ENCODE measurements at regions of chr16 and their contacts with region 1.

Region 1: DNA sequence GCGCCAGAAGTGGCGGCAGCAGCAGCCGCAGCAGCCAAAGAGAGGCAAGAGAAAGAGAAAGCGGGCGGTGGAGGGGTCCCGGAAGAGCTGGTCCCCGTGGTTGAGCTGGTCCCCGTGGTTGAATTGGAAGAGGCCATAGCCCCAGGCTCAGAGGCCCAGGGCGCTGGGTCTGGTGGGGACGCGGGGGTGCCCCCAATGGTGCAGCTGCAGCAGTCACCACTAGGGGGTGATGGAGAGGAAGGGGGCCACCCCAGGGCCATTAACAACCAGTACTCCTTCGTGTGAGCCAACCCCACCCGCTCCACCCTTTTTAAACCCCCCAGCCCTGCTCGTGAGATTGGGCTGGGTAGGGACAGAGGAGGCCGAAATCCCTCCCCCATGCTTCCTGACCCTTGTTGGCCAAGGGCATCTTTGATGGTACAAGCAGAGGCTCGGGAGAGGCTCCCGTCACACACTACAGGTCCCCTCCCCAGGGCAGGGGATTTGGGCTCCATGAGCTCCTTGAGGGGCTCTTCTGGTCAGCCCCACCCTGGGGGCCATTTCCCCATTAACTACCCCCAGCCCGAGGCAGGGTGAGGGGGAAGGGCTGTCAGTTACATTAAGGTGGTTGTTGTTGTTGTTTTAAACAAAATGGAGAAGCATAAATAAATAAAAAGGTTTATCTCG is 4.6 kb upstream of the ATP2A1 start:
- DNase-seq: peak; percentile 74
- CTCF ChIP-seq: peak; percentile 55

Region 2: DNA sequence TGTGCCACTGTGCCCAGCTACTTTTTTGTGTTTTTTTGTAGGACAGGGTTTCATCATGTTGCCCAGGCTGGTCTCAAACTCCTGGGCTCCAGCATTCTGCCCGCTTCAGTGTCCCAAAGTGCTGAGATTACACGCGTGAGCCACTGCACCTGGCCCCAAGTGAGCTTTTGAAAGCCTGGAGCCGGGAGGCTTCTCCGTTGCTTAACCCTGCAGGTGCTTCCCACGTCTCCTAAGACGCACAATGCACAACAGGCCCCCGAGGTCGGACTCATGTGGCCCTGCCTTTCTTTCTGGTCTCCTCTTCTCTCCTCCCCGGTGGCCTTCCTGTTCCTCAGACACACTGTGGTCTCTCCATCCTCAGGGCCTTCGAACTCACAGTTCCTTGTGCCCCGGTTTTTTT is 38.9 kb after region 1 on chr16:
- CTCF ChIA-PET with region 1: interaction called, 8 read pairs
- POLR2A ChIA-PET with region 1: interaction called, 15 read pairs
- DNase-seq: no peak
- CTCF ChIP-seq: no peak